ENCODE measurements at regions of chr11 and their contacts with region 1.

Region 1: DNA sequence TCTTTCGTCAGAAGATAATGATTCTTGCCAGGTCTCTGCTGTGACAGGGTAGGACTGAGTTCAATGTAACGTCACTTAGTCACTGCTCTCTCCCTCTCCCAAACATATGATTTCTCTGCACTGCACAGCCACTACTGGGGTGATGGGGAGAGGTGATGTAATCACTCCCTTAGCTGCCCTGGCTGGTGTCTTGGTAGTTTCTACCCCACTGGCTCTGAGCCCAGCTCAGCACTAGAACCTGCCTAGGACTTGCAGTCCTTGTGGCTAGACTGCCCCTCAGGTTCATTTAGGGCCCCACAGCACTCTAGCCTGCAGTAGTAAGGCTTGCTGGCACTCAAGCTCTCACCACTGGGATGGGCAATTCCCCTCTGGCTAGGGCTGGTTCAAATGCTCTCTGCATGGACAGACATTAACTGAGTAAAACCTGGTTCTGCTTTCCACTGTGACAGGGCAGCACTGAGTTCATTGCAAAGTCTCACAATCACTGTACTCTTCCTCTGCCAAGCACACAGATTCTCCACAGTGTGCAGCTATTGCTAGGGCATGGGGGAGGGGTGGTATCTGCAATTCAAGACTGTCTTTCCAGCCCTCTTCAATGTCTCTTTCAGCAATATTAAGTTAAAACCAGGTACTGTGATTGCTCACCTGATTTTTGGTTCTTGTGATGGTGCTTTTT is 571.4 kb upstream of the FAT3 start:
- DNase-seq: no peak
- ATAC-seq: no peak
- H3K4me3 ChIP-seq: no peak overlapping the region
- H3K27ac ChIP-seq: no peak overlapping the region
- H3K4me1 ChIP-seq: no peaks in the 10 kb centered on the region
- H3K27me3 ChIP-seq: no peaks in the 10 kb centered on the region
- CTCF ChIP-seq: no peak

Region 2: GRCh38 chr11:91163619-91164451 is 489.4 kb before region 1 on chr11:
- CTCF ChIA-PET with region 1: no interaction called
- POLR2A ChIA-PET with region 1: no interaction called
- in situ Hi-C with region 1: no loop called
- intact Hi-C with region 1: loop called (anchors 5 kb)
- DNase-seq: no peak
- ATAC-seq: no peak
- H3K4me3 ChIP-seq: no peak overlapping the region
- H3K27ac ChIP-seq: no peak overlapping the region
- H3K4me1 ChIP-seq: no peaks in the 10 kb centered on the region; the same call in 1 of the 2 replicates
- H3K27me3 ChIP-seq: no peaks in the 10 kb centered on the region
- CTCF ChIP-seq: no peak

Region 3: GRCh38 chr11:91707652-91708482 is 54.6 kb after region 1 on chr11:
- CTCF ChIA-PET with region 1: no interaction called
- POLR2A ChIA-PET with region 1: no interaction called
- in situ Hi-C with region 1: no loop called
- intact Hi-C with region 1: no loop called
- DNase-seq: no peak
- ATAC-seq: no peak
- H3K4me3 ChIP-seq: no peak overlapping the region
- H3K27ac ChIP-seq: no peak overlapping the region
- H3K4me1 ChIP-seq: no peaks in the 10 kb centered on the region
- H3K27me3 ChIP-seq: no peaks in the 10 kb centered on the region
- CTCF ChIP-seq: no peak

Measured in Panc1 (cell line).